Mammary epithelial cell (primary cell): ENCODE measurements at regions of chr1 and their contacts with region 1.

Region 1: GRCh38 chr1:101288491-101288944 is 51.7 kb downstream of the S1PR1 start:
- DNase-seq: peak; percentile 80
- H3K4me3 ChIP-seq: no peak overlapping the region
- H3K27ac ChIP-seq: no peak overlapping the region
- H3K4me1 ChIP-seq: peaks cover 11% of the 10 kb centered on the region
- H3K27me3 ChIP-seq: no peaks in the 10 kb centered on the region
- CTCF ChIP-seq: peak; percentile 88 to 90

Region 2: GRCh38 chr1:100921109-100921706 is 367.3 kb before region 1 on chr1:
- CTCF ChIA-PET with region 1: no interaction called
- dilution Hi-C with region 1: no loop called
- in situ Hi-C with region 1: loop called (anchors 10 kb)
- intact Hi-C with region 1: loop called (anchors 1 kb)
- DNase-seq: peak; percentile 25
- H3K4me3 ChIP-seq: no peak overlapping the region
- H3K27ac ChIP-seq: no peak overlapping the region
- H3K4me1 ChIP-seq: no peaks in the 10 kb centered on the region
- H3K27me3 ChIP-seq: no peaks in the 10 kb centered on the region
- CTCF ChIP-seq: peak; percentile 46 to 51

Region 3: DNA sequence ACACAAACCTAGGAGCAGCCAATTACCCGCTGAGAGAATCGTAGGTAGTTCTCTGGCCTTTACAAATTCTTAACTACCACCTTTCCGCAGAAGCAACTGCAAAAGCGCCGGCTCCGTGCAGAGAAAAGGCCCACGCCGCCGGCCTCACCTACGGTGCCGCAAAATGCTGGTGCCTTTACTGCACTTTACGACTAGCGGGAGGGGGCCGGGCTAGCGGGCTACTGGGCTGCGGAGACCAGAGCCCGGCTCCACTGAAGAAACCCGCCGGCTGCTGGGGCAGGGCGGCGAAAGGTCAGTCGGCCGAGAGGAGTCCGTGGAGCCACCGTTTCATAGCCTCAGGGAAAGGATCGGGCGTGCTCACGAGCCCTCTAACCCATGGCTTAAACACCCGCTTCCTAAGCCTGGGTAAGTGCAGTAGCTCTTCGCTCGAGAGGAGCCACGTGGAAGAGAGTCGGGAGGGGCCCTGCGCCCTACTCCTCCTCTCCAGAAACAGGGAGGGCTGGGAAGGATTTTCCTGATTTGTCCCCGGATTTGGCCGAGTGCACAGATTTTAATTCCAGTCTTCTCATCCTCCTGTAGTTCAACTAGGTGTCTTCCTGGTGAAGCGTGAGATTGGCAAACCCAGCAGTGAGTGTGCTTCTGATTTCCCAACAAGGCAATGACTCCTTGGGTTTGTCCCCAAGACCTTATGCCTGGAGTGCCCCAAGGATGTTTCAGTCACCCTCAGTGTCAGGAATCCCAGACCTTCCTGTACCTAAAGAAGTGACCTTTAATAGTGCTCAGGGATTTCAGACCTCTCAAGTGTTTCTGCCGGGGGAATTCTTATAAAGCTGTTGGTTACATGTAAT is 262.6 kb before region 1 on chr1 and contains the start of gene DPH5:
- CTCF ChIA-PET with region 1: interaction called, 4 read pairs
- dilution Hi-C with region 1: no loop called
- in situ Hi-C with region 1: no loop called
- intact Hi-C with region 1: loop called (anchors 5 kb)
- DNase-seq: peak; percentile 88
- H3K4me3 ChIP-seq: peak within 1 kb of the TSS; percentile 71 to 97 (median 94)
- H3K27ac ChIP-seq: peak within 1 kb of the TSS; percentile 80
- H3K4me1 ChIP-seq: no peaks in the 10 kb centered on the region
- H3K27me3 ChIP-seq: no peaks in the 10 kb centered on the region
- CTCF ChIP-seq: no peak
- total RNA-seq, gene DPH5: 21.2 to 47.0 TPM

Region 4: DNA sequence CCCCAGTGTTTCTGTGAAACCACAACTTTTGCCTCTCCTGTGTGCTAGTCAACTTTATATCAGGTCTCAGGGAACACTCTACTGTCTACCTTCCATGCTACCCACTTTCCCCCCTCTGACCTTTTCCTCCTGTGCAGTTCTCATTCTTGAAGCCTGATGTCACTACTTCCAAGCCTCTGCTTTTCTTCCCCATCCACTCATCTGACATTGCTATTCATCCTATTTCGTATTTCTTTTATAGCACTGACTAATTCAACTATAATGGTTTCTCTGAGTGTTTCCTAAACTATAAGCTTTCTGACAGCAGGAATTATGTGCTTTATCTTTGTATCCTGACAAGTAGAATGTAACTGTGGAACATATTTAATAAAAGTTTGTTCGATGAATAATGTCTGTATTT is 244.7 kb before region 1 on chr1:
- CTCF ChIA-PET with region 1: no interaction called
- dilution Hi-C with region 1: no loop called
- in situ Hi-C with region 1: no loop called
- intact Hi-C with region 1: loop called (anchors 1 kb)
- DNase-seq: peak; percentile 25
- H3K4me3 ChIP-seq: no peak overlapping the region
- H3K27ac ChIP-seq: no peak overlapping the region
- H3K4me1 ChIP-seq: no peaks in the 10 kb centered on the region
- H3K27me3 ChIP-seq: no peaks in the 10 kb centered on the region
- CTCF ChIP-seq: peak in 1 of 2 donors; percentile 36

Region 5: DNA sequence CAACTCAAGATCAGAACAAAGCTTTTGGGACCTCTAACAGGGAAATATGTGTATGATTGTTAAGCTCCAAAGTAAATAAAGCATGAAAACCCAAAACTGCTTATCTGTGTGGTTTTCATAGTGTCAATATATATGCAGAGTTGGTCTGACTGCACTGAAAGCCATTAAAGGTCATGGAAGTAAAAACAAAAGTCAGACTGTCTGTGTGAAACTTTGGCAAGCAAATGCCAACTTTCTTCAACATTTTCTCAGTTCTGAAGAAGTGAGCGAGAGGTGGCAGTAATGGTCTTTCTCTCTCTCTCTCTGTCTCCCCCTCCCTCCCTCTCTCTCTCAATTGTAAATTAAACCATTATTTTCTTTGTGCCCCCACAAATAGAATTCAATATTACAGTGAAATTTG is 151.8 kb before region 1 on chr1:
- CTCF ChIA-PET with region 1: interaction called, 6 read pairs
- dilution Hi-C with region 1: no loop called
- in situ Hi-C with region 1: no loop called
- intact Hi-C with region 1: loop called (anchors 1 kb)
- DNase-seq: no peak
- H3K4me3 ChIP-seq: no peak overlapping the region
- H3K27ac ChIP-seq: no peak overlapping the region
- H3K4me1 ChIP-seq: peaks cover 12% of the 10 kb centered on the region
- H3K27me3 ChIP-seq: no peaks in the 10 kb centered on the region
- CTCF ChIP-seq: peak in 1 of 2 donors; percentile 15